ENCODE measurements at regions of chr12 and their contacts with region 1.

Region 1: GRCh38 chr12:88052686-88053085 is 23.5 kb upstream of the C12orf50 start:
- DNase-seq: peak; percentile 62
- H3K4me3 Mint-ChIP-seq: no peak overlapping the region
- H3K27ac Mint-ChIP-seq: no peak overlapping the region
- H3K4me1 Mint-ChIP-seq: no peaks in the 10 kb centered on the region
- H3K27me3 Mint-ChIP-seq: no peaks in the 10 kb centered on the region

Region 2: GRCh38 chr12:87848248-87848868 is 204.3 kb before region 1 on chr12:
- CTCF ChIA-PET with region 1: no interaction called
- intact Hi-C with region 1: loop called (anchors 1 kb)
- DNase-seq: no peak
- H3K4me3 Mint-ChIP-seq: no peak overlapping the region
- H3K27ac Mint-ChIP-seq: no peak overlapping the region
- H3K4me1 Mint-ChIP-seq: no peaks in the 10 kb centered on the region
- H3K27me3 Mint-ChIP-seq: peaks cover 7% of the 10 kb centered on the region

Region 3: GRCh38 chr12:87866578-87867292 is 186.0 kb before region 1 on chr12:
- CTCF ChIA-PET with region 1: no interaction called
- intact Hi-C with region 1: loop called (anchors 2 kb)
- DNase-seq: no peak
- H3K4me3 Mint-ChIP-seq: no peak overlapping the region
- H3K27ac Mint-ChIP-seq: no peak overlapping the region
- H3K4me1 Mint-ChIP-seq: no peaks in the 10 kb centered on the region
- H3K27me3 Mint-ChIP-seq: no peaks in the 10 kb centered on the region

Region 4: GRCh38 chr12:87953256-87953860 is 99.3 kb before region 1 on chr12:
- CTCF ChIA-PET with region 1: no interaction called
- intact Hi-C with region 1: loop called (anchors 5 kb)
- DNase-seq: peak; percentile 12
- H3K4me3 Mint-ChIP-seq: no peak overlapping the region
- H3K27ac Mint-ChIP-seq: no peak overlapping the region
- H3K4me1 Mint-ChIP-seq: no peaks in the 10 kb centered on the region
- H3K27me3 Mint-ChIP-seq: no peaks in the 10 kb centered on the region

Region 5: DNA sequence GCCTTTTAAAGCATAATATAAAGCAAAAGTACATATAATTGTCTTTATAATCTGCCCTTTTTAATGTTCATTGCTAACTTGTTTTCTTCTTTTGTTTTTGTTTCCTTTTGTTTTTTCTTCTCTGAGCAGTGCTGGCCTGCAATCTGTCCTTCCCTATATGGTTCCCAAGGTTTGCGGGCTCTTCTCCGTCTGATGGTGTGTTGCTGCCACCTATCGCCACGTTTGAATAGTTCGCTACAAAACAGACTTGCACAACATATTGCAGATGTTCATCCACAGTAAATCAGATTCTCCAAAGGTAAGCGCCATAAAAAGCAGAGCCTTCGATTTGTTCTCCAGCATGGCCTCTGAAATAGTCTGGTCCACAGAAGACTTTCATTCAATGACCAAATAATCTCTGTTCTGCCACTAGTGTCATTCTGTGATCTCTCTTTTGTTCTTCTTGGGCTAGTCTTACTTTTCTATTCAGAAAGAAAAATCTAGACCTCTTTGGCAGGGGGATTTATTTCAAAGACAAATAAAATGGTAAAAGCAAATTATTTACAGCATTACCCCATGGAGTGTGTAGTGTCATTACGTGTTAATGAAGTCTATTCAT is 57.0 kb before region 1 on chr12:
- CTCF ChIA-PET with region 1: no interaction called
- intact Hi-C with region 1: loop called (anchors 1 kb)
- DNase-seq: peak; percentile 64
- H3K4me3 Mint-ChIP-seq: no peak overlapping the region
- H3K27ac Mint-ChIP-seq: no peak overlapping the region
- H3K4me1 Mint-ChIP-seq: no peaks in the 10 kb centered on the region
- H3K27me3 Mint-ChIP-seq: peaks cover 11% of the 10 kb centered on the region

Region 6: DNA sequence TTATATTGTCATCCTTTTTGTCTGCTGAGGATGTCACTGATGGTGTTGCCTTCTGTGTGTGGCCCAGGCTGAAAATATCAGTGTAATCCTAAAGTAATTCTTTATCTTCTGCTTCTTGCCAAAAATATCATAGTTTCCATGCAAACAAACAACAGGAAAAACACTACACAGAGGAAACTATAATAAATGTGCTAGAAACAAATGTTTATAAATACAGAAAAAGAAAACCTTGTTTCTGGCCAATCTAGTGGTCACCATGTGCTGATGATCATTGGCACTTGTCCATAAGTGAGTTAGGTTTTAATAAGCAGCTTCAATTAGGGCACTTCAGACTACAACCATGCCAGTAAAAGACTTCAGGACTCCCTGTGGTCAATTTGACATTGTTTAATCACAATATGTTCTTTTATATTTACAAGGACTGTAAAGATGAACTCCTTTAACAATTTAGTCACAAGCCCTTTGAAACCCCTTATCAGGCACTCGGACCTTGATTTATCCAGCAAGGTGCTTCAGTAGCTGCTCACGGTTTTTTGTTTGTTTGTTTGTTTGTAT is 214.2 kb after region 1 on chr12:
- CTCF ChIA-PET with region 1: no interaction called
- intact Hi-C with region 1: no loop called
- DNase-seq: no peak
- H3K4me3 Mint-ChIP-seq: no peak overlapping the region
- H3K27ac Mint-ChIP-seq: no peak overlapping the region
- H3K4me1 Mint-ChIP-seq: no peaks in the 10 kb centered on the region
- H3K27me3 Mint-ChIP-seq: no peaks in the 10 kb centered on the region